Mammary epithelial cell (primary cell): ENCODE measurements at regions of chr6 and their contacts with region 1.

Region 1: DNA sequence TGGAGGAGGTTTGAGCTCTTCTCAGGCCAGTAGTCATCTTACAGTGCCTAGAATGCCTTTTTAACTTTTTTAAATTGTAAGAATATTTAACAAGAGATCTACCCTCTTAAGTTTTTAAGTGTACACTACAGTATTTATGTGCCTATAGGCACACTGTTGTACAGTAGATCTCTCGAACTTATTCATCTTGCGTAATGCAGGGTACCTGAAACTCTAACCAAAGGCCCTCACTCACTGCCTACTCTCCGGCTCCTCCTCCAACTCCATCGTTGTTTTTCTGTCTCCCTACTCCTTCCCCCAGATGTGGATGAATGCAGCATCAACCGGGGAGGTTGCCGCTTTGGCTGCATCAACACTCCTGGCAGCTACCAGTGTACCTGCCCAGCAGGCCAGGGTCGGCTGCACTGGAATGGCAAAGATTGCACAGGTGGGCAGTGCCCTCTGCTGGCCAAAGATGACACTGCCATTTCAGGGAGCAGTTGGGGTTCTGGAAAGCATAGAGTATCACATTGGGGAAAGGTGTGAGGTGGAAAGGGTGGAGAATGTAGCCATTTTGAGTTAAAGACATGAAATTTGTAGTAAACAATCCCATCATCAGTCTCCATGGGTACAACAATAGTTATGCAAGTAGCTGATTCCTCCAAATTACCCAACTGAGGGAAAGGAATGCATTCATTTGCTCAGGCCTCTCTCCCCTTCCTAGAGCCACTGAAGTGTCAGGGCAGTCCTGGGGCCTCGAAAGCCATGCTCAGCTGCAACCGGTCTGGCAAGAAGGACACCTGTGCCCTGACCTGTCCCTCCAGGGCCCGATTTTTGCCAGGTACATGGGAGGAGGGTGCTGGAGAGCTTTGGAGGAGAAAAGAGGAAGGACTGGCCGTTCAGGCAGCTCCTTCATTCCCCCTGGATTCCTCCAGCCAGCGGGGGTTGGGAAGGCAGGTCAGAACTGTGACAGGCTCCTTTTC is 18.4 kb upstream of the ZNF76 start:
- DNase-seq: peak; percentile 62
- H3K4me3 ChIP-seq: no peak overlapping the region
- H3K27ac ChIP-seq: no peak overlapping the region
- H3K4me1 ChIP-seq: no peaks in the 10 kb centered on the region
- H3K27me3 ChIP-seq: no peaks in the 10 kb centered on the region
- CTCF ChIP-seq: peak; percentile 96 to 98

Region 2: GRCh38 chr6:35146453-35146852 is 94.7 kb before region 1 on chr6:
- CTCF ChIA-PET with region 1: no interaction called
- dilution Hi-C with region 1: loop called (anchors 5 kb)
- in situ Hi-C with region 1: no loop called
- intact Hi-C with region 1: loop called (anchors 1 kb)
- DNase-seq: peak; percentile 35
- H3K4me3 ChIP-seq: no peak overlapping the region
- H3K27ac ChIP-seq: no peak overlapping the region
- H3K4me1 ChIP-seq: peaks cover 10% of the 10 kb centered on the region
- H3K27me3 ChIP-seq: no peaks in the 10 kb centered on the region
- CTCF ChIP-seq: peak; percentile 53 to 81

Region 3: DNA sequence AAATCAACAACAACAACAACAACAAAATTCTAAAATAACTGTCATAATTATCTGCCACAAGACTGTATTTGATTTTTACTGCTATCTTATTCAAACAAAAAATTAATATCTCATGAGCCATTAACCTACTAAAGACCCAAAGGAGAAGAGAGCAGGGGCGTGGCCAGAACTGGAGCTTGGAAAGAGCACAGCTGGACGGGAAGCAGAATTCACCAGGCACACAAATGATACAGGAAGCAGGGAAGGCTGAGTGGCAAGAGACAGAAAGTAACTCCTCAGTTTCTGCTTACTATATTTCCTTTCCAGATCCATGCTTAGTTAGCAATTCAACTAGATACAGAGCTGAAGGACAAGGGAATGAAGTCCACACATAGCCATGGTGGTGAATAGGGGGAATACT is 393.2 kb after region 1 on chr6:
- CTCF ChIA-PET with region 1: no interaction called
- dilution Hi-C with region 1: no loop called
- in situ Hi-C with region 1: no loop called
- intact Hi-C with region 1: no loop called
- DNase-seq: no peak
- H3K4me3 ChIP-seq: no peak overlapping the region
- H3K27ac ChIP-seq: no peak overlapping the region
- H3K4me1 ChIP-seq: no peaks in the 10 kb centered on the region
- H3K27me3 ChIP-seq: no peaks in the 10 kb centered on the region
- CTCF ChIP-seq: no peak